Activated T-helper 1 cell treated with anti-CD3 and anti-CD28 coated beads, Interleukin-12 subunit alpha, Interleukin-12 subunit beta, Interleukin-2, Interleukin-4 antibody, amounts not matched to agents 30 ng/mL and 10 ng/mL and 1 ng/mL, durations not matched to agents 14 hours and 24 hours and 36 hours (primary cell): ENCODE measurements at regions of chr6 and their contacts with region 1.

Region 1: DNA sequence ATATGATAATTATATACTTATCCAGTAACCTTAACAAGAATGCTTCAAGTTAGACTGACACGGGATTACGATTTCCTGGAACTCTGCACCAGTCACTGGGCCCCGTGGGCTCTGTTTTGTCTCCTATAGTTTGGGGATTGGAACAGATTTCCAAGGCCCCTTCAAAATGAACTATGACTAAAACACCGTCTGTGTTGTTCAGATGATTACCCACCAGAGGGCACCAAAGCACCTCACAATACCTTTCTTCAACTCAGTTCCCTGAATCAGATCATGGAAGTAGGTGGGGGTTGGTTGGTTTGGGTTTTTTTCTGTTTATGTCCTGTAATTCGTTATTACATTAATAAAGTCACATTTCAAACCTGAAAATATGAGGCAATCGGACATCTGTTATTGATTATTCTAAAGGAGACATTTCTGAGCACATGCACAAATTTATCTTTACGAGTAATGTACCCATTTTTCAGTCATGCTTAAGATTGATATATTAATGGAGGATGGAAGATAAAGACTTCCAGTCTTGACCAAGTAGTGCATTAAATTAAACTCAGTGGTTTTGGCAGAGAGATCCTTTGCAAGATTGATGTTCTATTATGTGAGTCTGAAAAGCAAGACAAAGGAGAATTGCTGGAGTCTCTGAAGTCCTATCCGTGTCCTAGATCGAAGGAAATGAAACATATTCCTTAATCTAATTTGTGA is 112.0 kb upstream of the COL21A1 start:
- DNase-seq: peak; percentile 17
- H3K4me3 Mint-ChIP-seq: no peak overlapping the region
- H3K27ac Mint-ChIP-seq: no peak overlapping the region
- H3K4me1 Mint-ChIP-seq: no peaks in the 10 kb centered on the region
- H3K27me3 Mint-ChIP-seq: peaks cover 6% of the 10 kb centered on the region

Region 2: GRCh38 chr6:56172144-56172543 is 187.2 kb before region 1 on chr6:
- intact Hi-C with region 1: no loop called
- DNase-seq: no peak
- H3K4me3 Mint-ChIP-seq: no peak overlapping the region
- H3K27ac Mint-ChIP-seq: no peak overlapping the region
- H3K4me1 Mint-ChIP-seq: no peaks in the 10 kb centered on the region
- H3K27me3 Mint-ChIP-seq: no peaks in the 10 kb centered on the region

Region 3: DNA sequence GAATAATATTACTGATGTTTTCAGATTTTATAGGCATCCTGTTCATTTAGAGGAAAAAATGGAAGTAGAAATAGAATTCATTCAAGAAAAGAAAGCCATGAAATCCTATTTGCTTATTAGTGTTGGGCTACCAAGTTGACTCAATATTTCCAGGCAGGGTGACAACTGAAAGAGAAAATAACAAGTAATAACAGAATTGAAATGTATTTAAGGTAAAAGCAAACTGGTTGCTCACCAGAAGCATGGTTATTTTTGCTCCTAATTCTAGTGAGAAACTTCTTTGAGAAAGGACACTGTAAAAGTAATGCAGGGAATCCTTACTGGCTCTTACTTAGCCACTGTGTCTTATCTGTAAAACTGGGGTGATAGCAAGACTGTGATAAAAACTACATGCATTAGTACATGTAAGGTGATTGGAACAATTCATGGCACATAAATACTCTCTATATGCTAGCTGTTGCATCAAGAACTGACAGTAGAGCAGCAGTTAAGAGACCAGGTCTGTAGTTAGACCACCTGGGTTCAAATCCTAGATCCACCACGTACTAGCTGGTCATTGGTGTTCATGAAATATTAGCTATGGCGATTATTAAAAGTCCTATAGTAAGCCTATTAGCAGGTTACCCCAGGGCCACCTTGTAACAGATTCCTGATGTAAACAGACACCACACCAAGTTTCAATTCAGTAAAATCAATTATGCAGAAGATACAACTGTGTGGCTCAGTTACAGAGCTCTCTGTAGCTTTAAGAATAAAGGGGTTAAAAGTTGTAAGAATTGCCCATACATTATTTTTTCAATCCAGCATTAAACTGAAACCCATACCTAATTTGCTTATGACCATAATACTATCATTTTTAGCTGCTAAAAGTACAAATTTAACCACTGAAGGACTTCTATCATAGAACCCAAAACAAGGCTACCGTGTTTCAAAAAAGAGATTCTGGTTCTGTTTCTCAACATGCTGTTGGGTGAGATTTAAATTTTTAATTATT is 47.2 kb after region 1 on chr6:
- intact Hi-C with region 1: no loop called
- DNase-seq: no peak
- H3K4me3 Mint-ChIP-seq: no peak overlapping the region
- H3K27ac Mint-ChIP-seq: no peak overlapping the region
- H3K4me1 Mint-ChIP-seq: no peaks in the 10 kb centered on the region
- H3K27me3 Mint-ChIP-seq: peaks cover 2% of the 10 kb centered on the region

Region 4: DNA sequence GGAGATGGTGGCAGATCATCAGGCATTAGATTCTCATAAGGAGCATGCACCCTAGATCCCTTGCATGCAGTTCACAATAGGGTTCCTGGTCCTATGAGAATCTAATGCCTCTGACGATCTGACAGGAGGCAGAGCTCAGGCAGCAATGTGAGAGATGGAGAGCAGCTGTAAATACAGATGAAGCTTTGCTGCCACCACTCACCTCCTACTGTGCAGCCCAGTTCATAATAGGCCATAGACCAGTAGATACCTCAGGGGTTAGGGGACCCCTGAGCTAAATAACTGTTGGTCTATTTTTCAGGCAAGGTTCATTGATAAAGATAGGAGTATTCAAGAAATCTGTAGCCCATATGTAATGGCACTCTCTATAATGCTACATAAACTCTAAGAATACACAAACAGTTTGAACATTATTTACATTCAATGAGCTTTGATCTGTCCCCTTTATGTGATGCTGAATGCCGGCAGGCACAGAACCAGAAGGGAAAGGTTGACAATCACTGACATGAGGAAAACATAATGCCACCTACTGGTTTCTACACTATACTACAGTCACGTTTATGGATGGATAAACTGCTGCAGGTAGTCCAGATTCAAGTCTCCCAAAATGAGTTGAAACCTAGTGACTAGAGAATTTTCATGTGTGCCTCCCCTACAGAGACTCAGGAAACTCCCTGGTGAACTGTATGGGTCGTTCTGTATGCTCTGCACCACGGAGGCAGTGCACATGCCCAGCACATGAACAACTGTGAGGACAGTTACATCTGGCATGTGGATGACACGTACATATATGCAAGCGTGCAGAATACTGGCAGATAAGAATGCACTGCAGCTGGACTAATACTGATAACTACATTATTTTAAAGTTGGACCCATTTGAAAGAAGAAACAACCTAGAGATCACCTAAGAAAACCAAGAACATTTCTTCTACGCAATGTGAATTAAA is 211.3 kb after region 1 on chr6:
- intact Hi-C with region 1: loop called (anchors 1 kb)
- DNase-seq: no peak
- H3K4me3 Mint-ChIP-seq: no peak overlapping the region
- H3K27ac Mint-ChIP-seq: no peak overlapping the region
- H3K4me1 Mint-ChIP-seq: no peaks in the 10 kb centered on the region
- H3K27me3 Mint-ChIP-seq: peaks cover 2% of the 10 kb centered on the region

Region 5: GRCh38 chr6:56699066-56699654 is 339.8 kb after region 1 on chr6:
- intact Hi-C with region 1: loop called (anchors 1 kb)
- DNase-seq: no peak
- H3K4me3 Mint-ChIP-seq: no peak overlapping the region
- H3K27ac Mint-ChIP-seq: no peak overlapping the region
- H3K4me1 Mint-ChIP-seq: no peaks in the 10 kb centered on the region
- H3K27me3 Mint-ChIP-seq: no peaks in the 10 kb centered on the region